ENCODE measurements at regions of chr6 and their contacts with region 1.

Region 1: DNA sequence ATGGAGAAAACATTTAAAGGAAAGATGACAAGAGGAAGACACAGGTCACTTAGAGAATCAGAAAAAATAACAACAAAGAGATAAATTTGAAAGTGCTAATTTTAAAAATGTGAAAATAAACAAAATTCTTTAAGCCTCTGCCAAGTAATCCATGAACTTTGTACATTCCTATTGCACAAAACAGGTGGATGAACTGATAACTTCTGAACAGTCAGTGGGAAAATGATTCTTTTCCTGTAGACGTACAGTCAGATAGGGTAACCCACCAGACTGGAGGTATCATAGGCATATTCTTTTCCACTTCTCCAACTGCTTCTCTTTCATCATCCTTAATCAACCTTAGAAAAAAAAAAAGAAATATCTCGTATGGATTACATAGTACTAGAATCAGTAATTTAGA is 36.5 kb upstream of the CRISP1 start:
- DNase-seq: no peak
- CTCF ChIP-seq: no peak

Region 2: DNA sequence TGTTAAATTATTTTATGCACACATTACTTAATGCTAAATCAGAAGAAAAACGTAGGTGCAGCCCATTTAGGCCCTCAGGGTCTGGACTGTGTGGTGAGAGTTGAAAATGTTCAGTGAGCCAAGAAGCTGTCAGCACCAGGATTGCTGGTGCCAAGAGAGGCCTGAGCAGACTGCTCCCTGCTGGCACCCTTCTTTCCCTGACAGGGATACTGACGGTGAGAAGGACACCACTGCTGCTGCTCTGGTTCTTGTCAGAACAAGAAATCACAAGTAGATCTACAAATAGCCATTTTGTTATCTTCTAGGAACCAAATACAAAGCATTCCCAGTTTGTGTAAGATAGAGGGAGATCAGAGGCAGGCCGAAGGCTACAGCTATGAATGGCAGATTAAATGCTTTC is 12.2 kb after region 1 on chr6:
- CTCF ChIA-PET with region 1: interaction called, 10 read pairs
- POLR2A ChIA-PET with region 1: no interaction called
- DNase-seq: no peak
- CTCF ChIP-seq: no peak